H1 (cell line): ENCODE measurements at regions of chr9 and their contacts with region 1.

Region 1: GRCh38 chr9:120299785-120300184 is 280.2 kb downstream of the CDK5RAP2 start:
- DNase-seq: peak in 1 of 2 experiments; percentile 39
- H3K4me3 ChIP-seq: no peak overlapping the region
- H3K27ac ChIP-seq: no peak overlapping the region
- H3K4me1 ChIP-seq: no peaks in the 10 kb centered on the region
- H3K27me3 ChIP-seq: no peaks in the 10 kb centered on the region
- CTCF ChIP-seq: peak; percentile 56 to 66 (median 60)
- EP300 ChIP-seq: no peak
- POLR2A ChIP-seq: no peak
- RAD21 ChIP-seq: peak; percentile 65 to 68

Region 2: DNA sequence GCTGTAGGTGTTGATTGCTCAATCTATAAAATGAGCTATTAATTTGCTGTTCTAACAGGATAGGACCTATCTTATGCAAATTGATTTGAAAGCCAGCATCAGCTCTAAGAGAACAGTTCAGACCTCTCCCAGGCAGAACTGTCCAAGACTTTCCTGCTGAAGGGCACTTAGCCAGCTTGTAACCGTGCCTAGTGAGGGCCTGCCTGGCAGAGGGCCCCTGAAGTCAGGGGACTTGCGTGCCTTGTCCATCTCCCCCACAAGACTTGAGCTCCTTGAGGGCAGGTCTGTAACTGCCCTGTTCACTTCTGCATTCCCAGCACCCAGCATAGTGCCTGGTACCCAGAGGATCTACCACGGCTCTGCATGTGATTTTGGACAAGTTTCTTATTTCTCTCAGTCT is 13.3 kb before region 1 on chr9:
- CTCF ChIA-PET with region 1: interaction called, 10 read pairs
- POLR2A ChIA-PET with region 1: no interaction called
- DNase-seq: no peak
- H3K4me3 ChIP-seq: no peak overlapping the region
- H3K27ac ChIP-seq: no peak overlapping the region
- H3K4me1 ChIP-seq: peaks cover 0 to 3% (median 0%) of the 10 kb centered on the region in 4 experiments; a peak in 1 of 7 replicates
- H3K27me3 ChIP-seq: no peaks in the 10 kb centered on the region
- CTCF ChIP-seq: no peak
- EP300 ChIP-seq: no peak
- POLR2A ChIP-seq: no peak
- RAD21 ChIP-seq: no peak

Region 3: DNA sequence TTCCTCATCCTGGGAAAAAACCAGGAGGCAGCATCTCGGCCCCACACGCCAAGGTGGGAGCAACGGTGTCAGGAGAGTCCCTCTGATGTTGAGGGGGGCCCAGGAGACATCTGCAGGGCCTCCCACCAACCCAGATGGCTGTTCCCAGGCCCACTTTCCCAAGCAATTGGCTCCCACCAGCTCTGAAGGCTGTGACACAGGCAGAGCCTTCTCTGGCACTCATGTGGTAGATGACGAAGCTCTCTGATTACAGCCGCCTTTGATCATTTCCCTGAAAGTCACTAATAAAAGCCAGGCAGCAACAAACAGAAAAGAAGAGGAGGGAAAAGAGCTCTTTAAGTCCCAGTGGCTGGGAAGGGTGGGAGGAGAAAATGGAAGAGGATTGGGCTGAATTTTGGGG is 53.7 kb after region 1 on chr9:
- CTCF ChIA-PET with region 1: no interaction called
- POLR2A ChIA-PET with region 1: no interaction called
- DNase-seq: no peak
- H3K4me3 ChIP-seq: no peak overlapping the region
- H3K27ac ChIP-seq: no peak overlapping the region
- H3K4me1 ChIP-seq: peaks cover 2 to 7% (median 3%) of the 10 kb centered on the region in 4 experiments; a peak in 6 of 7 replicates
- H3K27me3 ChIP-seq: no peaks in the 10 kb centered on the region
- CTCF ChIP-seq: no peak
- EP300 ChIP-seq: no peak
- POLR2A ChIP-seq: no peak
- RAD21 ChIP-seq: no peak